K562 (cell line): ENCODE measurements at regions of chr7 and their contacts with region 1.

Region 1: DNA sequence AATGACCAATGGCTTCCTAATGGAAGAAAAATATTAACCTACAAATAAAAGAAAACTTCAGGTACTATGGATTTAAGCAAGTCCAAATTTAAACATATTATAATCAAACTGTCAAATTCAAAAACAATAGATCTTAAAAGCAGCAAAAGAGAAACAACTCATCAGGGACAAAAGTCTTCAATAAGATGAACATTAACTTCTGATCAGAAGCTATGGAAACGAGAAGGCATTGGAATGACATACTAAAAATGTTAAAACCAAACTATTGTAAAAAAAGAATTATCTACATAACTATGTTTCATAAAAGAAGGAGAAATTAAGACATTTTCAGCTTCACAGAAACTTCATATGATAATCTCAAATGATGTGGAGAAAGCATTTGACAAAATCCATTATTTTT is 334.7 kb downstream of the ANKRD7 start:
- DNase-seq: no peak
- ATAC-seq: no peak
- H3K4me3 ChIP-seq: no peak overlapping the region
- H3K27ac ChIP-seq: no peak overlapping the region
- H3K4me1 ChIP-seq: no peaks in the 10 kb centered on the region
- H3K27me3 ChIP-seq: no peaks in the 10 kb centered on the region
- CTCF ChIP-seq: no peak
- EP300 ChIP-seq: no peak
- POLR2A ChIP-seq: no peak
- RAD21 ChIP-seq: no peak

Region 2: GRCh38 chr7:118461742-118462141 is 97.5 kb before region 1 on chr7:
- CTCF ChIA-PET with region 1: no interaction called
- POLR2A ChIA-PET with region 1: no interaction called
- in situ Hi-C with region 1: no loop called
- intact Hi-C with region 1: no loop called
- DNase-seq: no peak
- ATAC-seq: no peak
- H3K4me3 ChIP-seq: no peak overlapping the region
- H3K27ac ChIP-seq: no peak overlapping the region
- H3K4me1 ChIP-seq: no peaks in the 10 kb centered on the region
- H3K27me3 ChIP-seq: no peaks in the 10 kb centered on the region
- CTCF ChIP-seq: no peak
- EP300 ChIP-seq: no peak
- POLR2A ChIP-seq: no peak
- RAD21 ChIP-seq: no peak

Region 3: DNA sequence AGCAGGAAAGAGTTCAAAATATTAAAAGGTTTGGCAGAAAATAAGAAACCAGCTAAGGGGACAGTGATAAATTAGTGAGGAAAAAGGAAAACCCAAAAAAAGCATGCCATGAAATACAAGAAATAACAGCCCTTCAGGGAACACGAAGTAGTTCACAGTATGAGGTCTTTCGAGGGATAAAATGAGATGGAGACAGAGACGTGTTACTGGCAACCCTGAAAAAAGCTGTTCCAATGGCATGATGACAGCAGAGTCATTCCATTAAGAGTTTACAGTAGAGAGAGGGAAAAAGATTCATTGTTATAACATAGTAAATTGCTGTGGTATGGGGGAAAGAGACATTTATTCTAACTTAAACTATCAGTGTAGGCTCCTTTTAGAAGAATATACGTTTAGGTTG is 56.5 kb after region 1 on chr7:
- CTCF ChIA-PET with region 1: no interaction called
- POLR2A ChIA-PET with region 1: no interaction called
- in situ Hi-C with region 1: no loop called
- intact Hi-C with region 1: loop called (anchors 10 kb)
- DNase-seq: no peak
- ATAC-seq: no peak
- H3K4me3 ChIP-seq: no peak overlapping the region
- H3K27ac ChIP-seq: no peak overlapping the region
- H3K4me1 ChIP-seq: no peaks in the 10 kb centered on the region
- H3K27me3 ChIP-seq: no peaks in the 10 kb centered on the region
- CTCF ChIP-seq: no peak
- EP300 ChIP-seq: no peak
- POLR2A ChIP-seq: no peak
- RAD21 ChIP-seq: no peak